SK-N-SH (cell line): ENCODE measurements at regions of chr3 and their contacts with region 1.

Region 1: DNA sequence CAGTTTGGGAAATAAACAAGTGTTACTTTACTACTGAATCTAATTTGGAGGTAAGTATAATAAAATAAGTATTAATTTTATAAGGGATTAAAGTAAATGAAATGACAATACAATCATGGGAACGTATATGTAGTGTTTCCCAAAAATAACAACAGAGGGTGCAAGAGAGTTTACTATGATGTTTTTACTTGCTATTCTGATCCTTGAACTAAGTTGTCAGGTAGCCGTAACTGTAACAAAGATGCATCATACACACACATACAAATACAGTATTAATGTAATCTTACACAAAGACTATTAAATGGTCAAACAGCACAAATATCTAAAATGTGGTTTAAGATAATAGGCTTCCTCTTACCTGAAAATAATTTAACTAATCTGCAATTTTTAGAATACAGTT is 311.4 kb downstream of the TBC1D5 start:
- DNase-seq: peak; percentile 38
- H3K4me3 ChIP-seq: no peak overlapping the region
- H3K27ac ChIP-seq: peak overlapping the region in 1 of 2 experiments; percentile 47; a peak in 1 of 4 replicates
- H3K4me1 ChIP-seq: peaks cover 4 to 8% of the 10 kb centered on the region in 2 experiments; a peak in 2 of 4 replicates
- H3K27me3 ChIP-seq: no peaks in the 10 kb centered on the region
- CTCF ChIP-seq: peak; percentile 63
- EP300 ChIP-seq: no peak
- RAD21 ChIP-seq: peak; percentile 79

Region 2: DNA sequence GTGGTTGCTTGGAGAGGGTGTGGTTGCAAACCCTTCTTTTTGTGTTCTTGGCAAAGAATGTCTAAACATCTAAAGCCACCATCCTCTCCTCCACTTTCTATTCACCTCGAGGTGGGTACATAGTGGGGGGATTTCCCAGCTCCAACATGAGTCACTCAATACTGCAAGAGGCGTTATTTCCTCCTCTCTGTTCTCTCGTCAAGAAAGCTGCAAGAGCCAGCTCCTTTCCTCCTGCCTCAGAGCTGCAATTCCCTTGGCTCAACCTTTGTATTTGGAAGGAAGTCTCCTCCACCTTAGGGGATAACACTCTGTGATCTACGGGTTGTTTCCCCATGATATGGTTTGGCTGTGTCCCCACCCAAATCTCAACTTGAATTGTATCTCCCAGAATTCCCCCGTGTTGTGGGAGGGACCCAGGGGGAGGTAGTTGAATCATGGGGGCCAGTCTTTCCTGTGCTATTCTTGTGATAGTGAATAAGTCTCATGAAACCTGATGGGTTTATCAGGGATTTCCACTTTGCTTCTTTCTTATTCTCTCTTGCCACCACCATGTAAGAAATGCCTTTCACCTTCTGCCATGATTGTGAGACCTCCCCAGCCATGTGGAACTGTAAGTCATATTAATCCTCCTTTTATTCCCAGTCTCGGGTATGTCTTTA is 407.9 kb before region 1 on chr3:
- CTCF ChIA-PET with region 1: no interaction called
- POLR2A ChIA-PET with region 1: no interaction called
- DNase-seq: no peak
- H3K4me3 ChIP-seq: no peak overlapping the region
- H3K27ac ChIP-seq: no peak overlapping the region
- H3K4me1 ChIP-seq: no peaks in the 10 kb centered on the region
- H3K27me3 ChIP-seq: no peaks in the 10 kb centered on the region
- CTCF ChIP-seq: no peak
- EP300 ChIP-seq: no peak
- RAD21 ChIP-seq: no peak

Region 3: DNA sequence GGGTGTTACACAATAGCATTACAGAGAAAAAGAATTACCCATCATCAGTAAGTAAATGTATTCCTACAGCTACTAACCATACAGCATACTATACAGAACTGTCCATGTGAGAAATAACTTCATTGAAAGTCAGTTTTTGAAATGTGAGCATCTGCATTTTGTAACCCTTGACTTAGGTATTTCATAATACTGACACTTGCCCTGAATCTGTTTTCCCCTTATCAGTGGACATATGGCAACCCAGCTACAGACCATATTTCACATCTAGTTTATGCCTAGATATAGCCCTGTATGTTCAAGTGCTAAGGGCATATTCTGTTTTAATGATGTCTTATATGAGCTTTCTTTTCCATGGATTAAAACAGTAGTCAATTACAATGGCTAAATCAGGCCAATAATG is 13.9 kb after region 1 on chr3:
- CTCF ChIA-PET with region 1: interaction called, 16 read pairs
- POLR2A ChIA-PET with region 1: no interaction called
- DNase-seq: peak; percentile 52
- H3K4me3 ChIP-seq: no peak overlapping the region
- H3K27ac ChIP-seq: peak overlapping the region in 1 of 2 experiments; percentile 11; a peak in 1 of 4 replicates
- H3K4me1 ChIP-seq: no peaks in the 10 kb centered on the region
- H3K27me3 ChIP-seq: no peaks in the 10 kb centered on the region
- CTCF ChIP-seq: no peak
- EP300 ChIP-seq: peak in 1 of 2 experiments; percentile 72; a peak in 2 of 4 replicates
- RAD21 ChIP-seq: no peak

Region 4: DNA sequence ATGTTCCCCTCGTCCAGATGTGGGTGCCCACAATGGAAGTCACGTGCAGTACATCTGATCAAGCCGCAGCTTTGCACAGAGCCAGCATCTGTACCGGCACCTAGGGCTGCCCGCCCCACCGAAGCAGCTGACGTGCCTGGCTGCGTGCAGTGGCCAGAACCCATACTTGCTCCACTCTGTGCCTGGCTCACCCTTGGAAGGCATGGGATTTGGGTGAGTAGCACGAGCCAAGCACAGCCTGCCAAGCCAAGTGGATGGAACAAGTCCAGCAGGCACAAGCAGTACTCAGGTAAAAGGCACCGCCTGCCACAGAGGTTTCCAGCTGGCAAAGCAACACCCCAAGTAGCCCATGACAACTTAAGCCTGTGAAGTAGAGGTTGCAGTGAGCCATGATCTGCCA is 50.1 kb after region 1 on chr3:
- CTCF ChIA-PET with region 1: no interaction called
- POLR2A ChIA-PET with region 1: no interaction called
- DNase-seq: no peak
- H3K4me3 ChIP-seq: no peak overlapping the region
- H3K27ac ChIP-seq: no peak overlapping the region
- H3K4me1 ChIP-seq: no peaks in the 10 kb centered on the region; a peak in 1 of 4 replicates
- H3K27me3 ChIP-seq: no peaks in the 10 kb centered on the region
- CTCF ChIP-seq: no peak
- EP300 ChIP-seq: no peak
- RAD21 ChIP-seq: no peak